HAP-1 (cell line): ENCODE measurements at regions of chr1 and their contacts with region 1.

Region 1: GRCh38 chr1:36285448-36286101 is 20.6 kb upstream of the SH3D21 start:
- DNase-seq: peak; percentile 72
- H3K4me3 ChIP-seq: no peak overlapping the region
- H3K4me1 ChIP-seq: no peaks in the 10 kb centered on the region
- H3K27me3 ChIP-seq: no peaks in the 10 kb centered on the region

Region 2: DNA sequence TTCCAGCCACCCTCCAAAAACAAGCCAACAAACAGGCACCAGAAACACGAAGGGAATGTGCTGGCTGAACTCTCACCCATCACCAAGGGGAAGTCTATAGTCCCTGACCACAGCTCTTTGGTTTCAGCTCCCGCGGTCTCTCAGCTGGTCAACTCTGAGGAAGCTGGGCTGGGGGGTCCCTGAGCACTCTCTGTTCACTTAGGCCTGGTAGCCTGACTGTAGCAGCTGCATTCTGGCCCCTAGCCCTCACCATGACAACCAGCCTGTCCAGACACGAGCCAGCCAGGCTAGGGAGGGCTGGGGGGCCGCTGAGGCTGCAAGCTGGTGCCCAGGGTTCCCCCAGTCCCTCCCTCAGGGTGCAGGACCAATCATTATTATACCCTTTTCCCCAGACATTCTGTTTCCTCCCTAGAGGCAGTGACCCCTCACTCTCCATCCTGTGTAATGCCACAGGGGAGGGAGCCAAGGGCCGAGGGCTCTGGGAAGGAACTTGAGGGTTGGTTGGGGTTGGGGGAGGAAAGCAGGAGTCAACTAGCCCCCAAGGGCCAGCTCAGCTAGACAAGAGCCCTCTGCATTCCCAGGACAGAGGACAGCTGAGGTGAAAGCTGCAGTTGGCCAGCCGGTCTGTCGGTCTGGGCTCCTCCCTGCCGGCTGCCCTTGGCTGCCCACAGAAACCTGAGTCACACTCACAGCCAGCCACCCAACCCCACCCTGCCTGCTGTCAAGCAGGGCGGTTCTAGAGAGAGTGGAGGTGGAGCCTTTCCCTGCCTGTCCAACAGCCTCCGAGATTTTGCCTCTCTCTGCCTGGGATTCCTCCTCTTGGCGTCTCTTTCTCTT is 135.1 kb before region 1 on chr1:
- in situ Hi-C with region 1: loop called (anchors 5 kb)
- DNase-seq: peak; percentile 93 to 96
- H3K4me3 ChIP-seq: no peak overlapping the region
- H3K4me1 ChIP-seq: peaks cover 21% of the 10 kb centered on the region
- H3K27me3 ChIP-seq: no peaks in the 10 kb centered on the region